ENCODE measurements at regions of chr22 and their contacts with region 1.

Region 1: GRCh38 chr22:44497218-44497904 is 672 bp downstream of the RTL6 start:
- DNase-seq: peak in 2 of 10 donors; percentile 18 to 49
- H3K4me3 ChIP-seq: peak overlapping the region; percentile 57 to 96 (median 82)
- H3K27ac ChIP-seq: peak overlapping the region in 50 of 59 donors; percentile 13 to 87 (median 73)
- H3K27me3 ChIP-seq: no peaks in the 10 kb centered on the region
- CTCF ChIP-seq: no peak

Region 2: DNA sequence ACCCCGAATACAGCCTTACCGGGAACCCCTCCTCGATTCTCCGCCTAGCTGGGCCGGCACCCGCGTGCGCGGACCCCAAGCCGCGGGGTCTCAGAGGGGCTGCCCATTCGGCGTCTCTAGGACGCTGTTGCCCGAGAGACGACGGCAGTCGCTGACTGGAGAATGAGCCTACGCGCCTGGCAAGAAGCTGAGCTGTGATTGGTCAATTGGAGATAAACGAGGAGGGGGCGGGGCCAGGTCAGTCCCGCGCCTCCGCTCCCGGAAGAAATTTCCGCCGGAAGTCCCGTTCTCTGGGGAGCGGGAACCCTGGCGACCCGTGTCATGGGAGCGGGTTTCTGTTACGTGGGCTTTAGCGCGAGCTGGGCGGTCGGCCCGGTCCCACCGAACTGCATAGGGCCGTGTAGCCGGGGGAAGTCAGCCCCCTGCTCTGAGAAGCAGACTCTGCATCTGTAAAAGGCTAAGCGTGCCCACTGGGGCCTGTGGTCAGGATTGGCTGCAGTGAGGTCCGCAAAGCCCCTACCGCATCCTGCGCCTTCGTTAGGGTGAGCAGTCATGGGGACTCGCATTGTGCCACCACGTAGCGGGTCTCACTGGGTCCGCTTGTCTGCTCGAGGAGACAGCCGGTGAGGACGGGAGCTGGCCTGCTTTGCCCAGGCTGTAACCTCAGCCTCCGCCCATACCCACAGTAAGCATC is 685.1 kb before region 1 on chr22 and contains the start of gene EFCAB6:
- intact Hi-C with region 1: loop called in 1 of 2 experiments (anchors 5 kb)
- DNase-seq: peak; percentile 87 to 96 (median 94)
- H3K4me3 ChIP-seq: peak within 1 kb of the TSS; percentile 60 to 100 (median 93)
- H3K27ac ChIP-seq: peak within 1 kb of the TSS in 57 of 59 donors; percentile 13 to 92 (median 80)
- H3K27me3 ChIP-seq: no peaks in the 10 kb centered on the region
- CTCF ChIP-seq: peak in 17 of 56 donors; percentile 9 to 42 (median 16)
- total RNA-seq, gene EFCAB6: 6.6 to 23.9 (median 13.5) TPM

Region 3: GRCh38 chr22:43993027-43993760 is 504.2 kb before region 1 on chr22:
- intact Hi-C with region 1: loop called in 1 of 2 experiments (anchors 10 kb)
- DNase-seq: peak in 8 of 10 donors; percentile 24 to 69 (median 55)
- H3K4me3 ChIP-seq: no peak overlapping the region
- H3K27ac ChIP-seq: peak overlapping the region in 42 of 59 donors; percentile 1 to 82 (median 61)
- H3K27me3 ChIP-seq: no peaks in the 10 kb centered on the region
- CTCF ChIP-seq: peak; percentile 79 to 99 (median 95)

Region 4: DNA sequence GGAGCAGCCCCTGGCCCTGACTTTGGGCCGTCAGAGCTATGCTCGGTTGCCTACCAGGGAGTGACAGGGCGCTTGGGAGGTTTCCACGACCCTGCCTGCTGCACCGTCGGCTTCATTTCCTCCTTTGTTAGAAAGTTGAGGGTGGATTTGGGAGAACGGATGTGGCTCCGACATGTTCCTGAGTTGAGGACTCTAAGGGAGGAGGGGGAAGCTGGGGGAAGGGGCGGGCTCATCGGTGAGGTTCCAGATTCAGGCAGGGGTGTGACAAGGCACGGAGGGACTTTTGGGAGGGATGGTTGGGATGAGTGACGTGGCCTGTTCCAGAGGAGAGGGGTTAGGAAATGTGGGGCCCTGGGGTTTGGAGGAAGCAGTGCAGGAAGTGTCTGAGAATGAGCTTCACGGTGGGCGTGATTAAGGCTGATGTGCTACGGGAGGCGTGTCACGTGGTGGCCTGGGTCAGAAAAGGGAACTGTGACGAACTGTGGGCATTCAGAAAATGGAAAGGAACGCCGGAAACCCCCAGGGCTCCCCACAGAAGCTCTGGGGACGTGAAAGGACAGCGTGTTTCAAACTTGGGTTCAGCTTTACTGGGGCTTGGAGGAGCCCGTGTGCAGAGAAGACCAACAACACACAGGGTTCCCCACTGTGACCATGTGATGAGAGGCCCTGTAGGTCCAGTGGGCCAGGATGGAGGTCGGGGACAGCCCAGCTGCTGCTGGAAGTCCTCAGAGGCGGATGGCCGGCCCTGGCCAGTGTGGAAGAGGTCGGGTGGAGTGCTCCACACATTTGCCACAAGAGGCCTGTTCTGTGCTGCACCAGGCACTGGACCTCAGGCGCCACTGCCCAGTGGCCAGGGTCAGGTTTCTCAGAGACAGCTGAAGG is 470.5 kb before region 1 on chr22:
- intact Hi-C with region 1: no loop called
- DNase-seq: peak in 4 of 10 donors; percentile 20 to 61 (median 48)
- H3K4me3 ChIP-seq: peak overlapping the region in 34 of 59 donors; percentile 1 to 74 (median 26)
- H3K27ac ChIP-seq: peak overlapping the region; percentile 15 to 93 (median 84)
- H3K27me3 ChIP-seq: peaks cover 0 to 4% (median 0%) of the 10 kb centered on the region in 45 donors
- CTCF ChIP-seq: no peak